A673 (cell line): ENCODE measurements at regions of chr17 and their contacts with region 1.

Region 1: DNA sequence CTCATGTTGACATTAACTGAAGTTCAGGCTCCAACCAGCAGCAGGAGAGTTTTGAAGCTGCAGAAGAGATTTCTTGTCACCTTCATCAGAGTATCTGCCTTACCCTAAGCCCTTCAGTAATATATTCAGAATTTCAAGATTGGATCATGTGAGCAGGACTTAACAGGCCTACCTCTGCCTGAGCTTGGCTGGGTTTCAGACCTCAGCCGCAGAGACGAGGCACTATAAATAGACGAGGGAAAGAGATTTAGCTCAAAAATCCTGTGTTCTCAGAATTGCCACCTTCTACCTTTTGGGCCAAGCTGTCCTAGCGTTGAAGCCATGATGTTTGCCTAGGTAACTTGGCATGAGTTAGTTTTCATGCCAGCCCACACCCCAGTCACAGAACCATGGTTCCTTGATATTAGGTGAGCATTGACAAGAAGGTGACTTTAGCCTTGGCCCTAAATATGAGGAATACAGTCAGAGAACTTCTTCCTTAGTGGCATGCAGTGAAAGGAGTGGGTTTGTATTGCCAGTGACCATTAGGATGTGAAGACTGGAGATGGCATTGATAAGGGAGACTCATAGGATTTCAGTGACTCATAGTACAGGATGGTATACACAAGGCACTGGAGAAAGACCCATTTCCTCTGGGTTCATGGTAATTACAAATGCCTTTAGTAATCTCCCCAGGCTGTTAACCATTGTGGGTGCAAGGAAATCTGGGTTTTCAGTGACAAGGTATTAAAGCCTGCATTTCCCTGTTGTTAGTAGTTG is 224.3 kb downstream of the MSI2 start:
- DNase-seq: peak; percentile 76
- H3K4me3 ChIP-seq: no peak overlapping the region
- H3K27ac ChIP-seq: peak overlapping the region; percentile 38
- H3K4me1 ChIP-seq: peaks cover 83% of the 10 kb centered on the region
- H3K27me3 ChIP-seq: no peaks in the 10 kb centered on the region
- CTCF ChIP-seq: no peak

Region 2: GRCh38 chr17:56913864-56914640 is 566.6 kb before region 1 on chr17 and contains the start of gene TRIM25:
- CTCF ChIA-PET with region 1: no interaction called
- POLR2A ChIA-PET with region 1: no interaction called
- intact Hi-C with region 1: no loop called
- DNase-seq: peak; percentile 95
- H3K4me3 ChIP-seq: peak within 1 kb of the TSS; percentile 73
- H3K27ac ChIP-seq: peak within 1 kb of the TSS; percentile 78
- H3K4me1 ChIP-seq: peaks cover 4% of the 10 kb centered on the region
- H3K27me3 ChIP-seq: no peaks in the 10 kb centered on the region
- CTCF ChIP-seq: no peak
- total RNA-seq, gene TRIM25: 54.7 and 58.0 TPM in 2 replicates

Region 3: DNA sequence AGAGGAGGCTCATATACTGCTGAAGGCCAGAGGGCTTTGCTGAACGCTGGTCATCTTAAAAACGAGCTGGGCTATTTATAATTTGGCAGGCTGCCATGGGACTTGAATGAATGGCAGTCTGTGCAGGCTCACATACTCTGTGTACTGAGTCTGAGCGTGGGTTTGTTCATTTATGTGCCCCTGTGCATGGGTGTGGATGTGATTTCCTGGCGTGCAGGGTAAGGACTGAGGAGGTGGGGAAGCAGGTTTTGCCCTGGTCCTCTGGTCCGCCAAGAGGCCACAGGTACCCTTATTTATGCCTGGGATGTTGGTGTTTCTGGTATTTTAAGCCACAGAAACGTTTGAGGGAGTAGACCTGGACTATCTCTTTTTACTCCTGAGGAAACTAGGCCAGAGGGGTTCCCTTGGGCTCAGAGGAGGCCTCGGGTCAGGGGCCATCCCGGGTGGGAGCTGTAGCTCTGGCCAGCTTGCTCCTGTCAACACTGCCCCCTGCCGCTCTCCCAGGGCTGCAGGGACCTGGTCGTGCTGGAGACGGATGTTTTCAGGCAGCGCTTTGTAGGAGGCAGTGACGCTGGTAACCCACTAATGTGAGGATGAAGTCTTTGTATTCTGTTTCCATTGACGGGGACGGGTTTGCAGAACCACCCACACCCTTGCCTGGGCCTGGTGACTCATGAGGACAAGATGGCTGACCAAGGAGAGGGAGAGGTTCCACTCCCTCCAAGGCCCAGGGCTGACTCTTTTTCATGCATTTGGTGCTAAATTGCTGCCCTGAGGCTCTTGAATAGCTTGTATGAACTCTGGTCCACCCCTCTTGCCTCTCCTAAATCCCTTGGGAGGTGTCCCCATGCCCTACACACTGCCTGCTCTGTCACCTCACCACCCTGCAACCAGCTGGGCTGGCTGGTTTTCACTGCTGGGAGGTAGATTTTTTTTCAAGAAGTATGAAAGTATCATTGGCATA is 39.8 kb before region 1 on chr17:
- CTCF ChIA-PET with region 1: no interaction called
- POLR2A ChIA-PET with region 1: no interaction called
- intact Hi-C with region 1: no loop called
- DNase-seq: peak; percentile 59
- H3K4me3 ChIP-seq: no peak overlapping the region
- H3K27ac ChIP-seq: peak overlapping the region; percentile 35
- H3K4me1 ChIP-seq: peaks cover 32% of the 10 kb centered on the region
- H3K27me3 ChIP-seq: no peaks in the 10 kb centered on the region
- CTCF ChIP-seq: no peak

Region 4: DNA sequence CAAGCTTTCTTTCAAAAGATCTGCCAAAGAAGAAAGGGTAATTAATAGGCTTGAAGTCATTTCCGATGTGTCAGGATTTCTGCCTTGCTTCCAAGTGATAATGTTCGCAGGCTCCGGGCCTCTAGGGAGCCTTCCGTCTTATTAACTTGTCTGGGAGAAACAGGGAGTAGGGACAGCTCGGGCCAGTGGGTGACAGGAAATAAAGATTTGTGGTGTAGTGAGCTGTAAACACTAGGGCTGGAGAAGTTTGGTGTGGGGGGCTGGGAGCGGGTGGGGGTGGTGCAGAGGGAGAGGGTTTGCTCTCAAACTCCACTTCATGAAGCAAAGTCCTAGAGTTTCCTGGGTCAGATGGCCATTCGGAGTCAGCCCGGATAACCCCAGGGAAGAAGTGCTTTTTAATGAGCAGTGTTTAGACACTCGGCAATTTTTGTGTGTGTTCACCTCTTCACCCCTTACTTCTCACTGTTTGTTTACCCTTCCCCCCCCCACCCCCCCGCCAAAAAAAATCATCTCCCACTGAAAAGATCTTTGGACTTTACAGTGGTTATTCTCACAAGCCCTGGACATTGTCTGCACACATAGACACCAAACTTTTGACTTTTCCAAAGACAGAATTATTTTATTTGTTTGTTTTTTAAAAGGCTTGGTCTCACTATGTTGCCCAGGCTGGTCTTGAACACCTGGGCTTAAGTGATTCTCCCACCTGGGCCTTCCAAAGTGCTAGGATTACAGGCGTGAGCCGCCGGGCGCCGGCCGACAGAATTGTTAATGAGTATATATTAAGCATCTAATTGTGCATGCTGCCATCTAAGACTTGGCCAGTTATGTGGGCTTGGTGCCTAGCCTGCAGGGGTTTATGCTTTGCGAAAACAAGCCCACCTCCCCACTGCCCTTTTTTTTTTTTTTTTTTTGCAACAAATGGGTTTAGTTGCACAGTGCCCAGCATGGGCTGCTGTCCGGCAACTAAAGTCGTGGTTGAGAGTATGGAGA is 68.1 kb after region 1 on chr17:
- CTCF ChIA-PET with region 1: no interaction called
- POLR2A ChIA-PET with region 1: no interaction called
- intact Hi-C with region 1: loop called (anchors 1 kb)
- DNase-seq: peak; percentile 99
- H3K4me3 ChIP-seq: no peak overlapping the region
- H3K27ac ChIP-seq: peak overlapping the region; percentile 60
- H3K4me1 ChIP-seq: peaks cover 96% of the 10 kb centered on the region
- H3K27me3 ChIP-seq: no peaks in the 10 kb centered on the region
- CTCF ChIP-seq: no peak

Region 5: DNA sequence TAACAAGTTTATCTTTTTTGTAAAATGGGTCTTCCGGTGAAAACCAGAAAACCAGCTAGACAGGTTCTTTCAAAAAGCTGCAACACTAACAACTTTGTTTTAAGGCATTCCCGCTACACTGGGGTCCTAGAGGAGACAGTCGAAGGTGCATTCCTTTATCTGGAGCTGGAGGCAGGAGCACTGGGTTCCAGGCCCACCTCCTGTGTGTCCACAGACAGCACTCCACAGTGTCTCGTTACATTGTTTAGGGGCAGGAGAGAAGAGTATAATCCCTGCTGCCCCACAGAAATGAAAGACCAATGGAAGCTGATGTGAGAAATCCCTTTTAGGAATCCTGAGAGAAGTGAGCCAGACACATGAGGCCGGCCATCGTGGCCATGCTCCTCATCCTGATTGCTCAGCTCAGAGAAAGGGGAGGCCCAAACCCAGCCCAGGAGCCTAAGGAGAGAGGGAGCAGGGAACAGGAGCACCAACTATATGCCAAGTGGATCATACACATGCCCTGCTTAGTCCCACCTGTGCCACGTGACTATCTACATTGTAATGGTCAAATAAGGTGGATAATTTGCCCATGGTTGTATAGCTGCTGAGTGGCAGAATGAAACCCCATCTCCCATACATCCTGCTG is 205.0 kb after region 1 on chr17:
- CTCF ChIA-PET with region 1: no interaction called
- POLR2A ChIA-PET with region 1: interaction called, 10 read pairs
- intact Hi-C with region 1: no loop called
- DNase-seq: no peak
- H3K4me3 ChIP-seq: no peak overlapping the region
- H3K27ac ChIP-seq: no peak overlapping the region
- H3K4me1 ChIP-seq: no peaks in the 10 kb centered on the region
- H3K27me3 ChIP-seq: no peaks in the 10 kb centered on the region
- CTCF ChIP-seq: no peak